MCF 10A (cell line): ENCODE measurements at regions of chr12 and their contacts with region 1.

Region 1: DNA sequence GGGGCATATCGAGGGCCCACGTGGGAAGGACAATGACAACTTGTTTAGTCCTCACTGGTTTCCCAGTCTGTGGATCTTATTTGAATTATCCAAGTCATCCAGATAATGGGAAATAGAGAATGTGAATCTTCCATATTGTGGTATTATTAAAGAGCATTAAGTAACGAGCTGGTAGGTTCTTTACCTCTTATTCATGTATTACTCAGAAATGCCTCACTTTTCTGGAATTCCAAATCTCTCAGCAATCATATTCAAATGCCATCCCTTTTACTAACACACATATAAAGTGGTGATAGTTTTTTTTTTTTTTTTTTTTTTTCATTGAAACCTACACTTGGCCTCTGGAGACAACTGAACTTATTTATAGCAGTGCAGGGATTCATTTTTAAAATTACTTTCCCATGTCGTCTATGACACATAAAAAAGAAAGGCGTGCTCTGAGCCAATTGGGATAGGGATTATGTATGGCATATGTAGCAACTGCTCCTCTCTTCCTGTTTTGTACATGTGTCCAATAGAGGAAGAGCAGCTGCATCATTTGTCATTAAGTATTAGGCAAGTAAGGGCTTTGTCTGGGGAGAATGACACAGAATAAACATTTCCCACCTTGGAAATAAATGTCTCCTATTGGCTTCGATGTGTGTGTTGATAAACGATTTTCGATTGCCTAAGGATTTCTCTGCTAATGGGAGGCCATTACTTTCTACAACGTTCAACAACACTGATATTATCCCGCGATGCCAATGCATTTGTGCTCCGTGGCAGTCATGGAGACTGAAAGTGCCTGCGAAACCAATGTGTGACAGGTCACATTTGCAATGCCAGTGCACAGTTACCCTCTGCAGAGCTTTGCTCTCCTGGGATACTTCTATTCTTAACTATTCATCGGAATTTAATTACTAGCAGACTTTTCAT is 78.6 kb upstream of the IFNG-AS1 start:
- DNase-seq: peak; percentile 76
- H3K4me3 Mint-ChIP-seq: no peak overlapping the region
- H3K27ac Mint-ChIP-seq: peak overlapping the region; percentile 61
- H3K4me1 Mint-ChIP-seq: peaks cover 27% of the 10 kb centered on the region
- H3K27me3 Mint-ChIP-seq: no peaks in the 10 kb centered on the region
- CTCF ChIP-seq: no peak

Region 2: DNA sequence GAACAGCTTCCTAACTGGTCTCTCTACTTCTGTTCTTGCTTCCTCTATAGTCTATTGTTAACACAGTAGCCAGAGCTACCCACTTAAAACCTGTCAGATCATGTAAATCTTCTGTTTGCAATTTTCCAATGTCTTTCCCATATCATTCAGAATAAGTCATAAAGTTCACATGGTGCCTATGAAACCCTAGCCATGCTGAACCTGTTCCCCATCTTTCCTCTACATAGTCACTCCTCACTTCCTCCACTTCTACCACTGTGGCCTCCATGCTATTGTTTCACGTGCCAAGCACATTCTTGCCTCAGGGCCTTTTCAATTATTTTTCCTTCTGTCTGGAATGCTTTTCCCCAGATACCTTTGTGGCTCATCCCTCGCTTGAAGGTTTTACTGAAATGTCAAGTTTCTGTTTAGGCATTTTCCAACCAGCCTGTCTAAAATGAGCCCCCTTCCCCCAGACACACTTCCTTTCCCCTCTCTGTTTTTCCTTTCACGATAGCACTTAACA is 130.0 kb before region 1 on chr12:
- CTCF ChIA-PET with region 1: no interaction called
- POLR2A ChIA-PET with region 1: no interaction called
- intact Hi-C with region 1: no loop called
- DNase-seq: no peak
- H3K4me3 Mint-ChIP-seq: no peak overlapping the region
- H3K27ac Mint-ChIP-seq: no peak overlapping the region
- H3K4me1 Mint-ChIP-seq: no peaks in the 10 kb centered on the region
- H3K27me3 Mint-ChIP-seq: no peaks in the 10 kb centered on the region
- CTCF ChIP-seq: no peak

Region 3: GRCh38 chr12:67811437-67812361 is 98.9 kb before region 1 on chr12:
- CTCF ChIA-PET with region 1: no interaction called
- POLR2A ChIA-PET with region 1: no interaction called
- intact Hi-C with region 1: loop called (anchors 10 kb)
- DNase-seq: peak; percentile 71
- H3K4me3 Mint-ChIP-seq: no peak overlapping the region
- H3K27ac Mint-ChIP-seq: no peak overlapping the region
- H3K4me1 Mint-ChIP-seq: no peaks in the 10 kb centered on the region
- H3K27me3 Mint-ChIP-seq: no peaks in the 10 kb centered on the region
- CTCF ChIP-seq: no peak